Dorsolateral prefrontal cortex (tissue), 120 donors: ENCODE measurements at regions of chr4 and their contacts with region 1.

Region 1: GRCh38 chr4:39134683-39135319 is 47.5 kb upstream of the WDR19 start:
- DNase-seq: no peak
- H3K4me3 ChIP-seq: peak overlapping the region in 30 of 59 donors; percentile 1 to 53 (median 20)
- H3K27ac ChIP-seq: peak overlapping the region in 37 of 59 donors; percentile 2 to 77 (median 38)
- H3K27me3 ChIP-seq: no peaks in the 10 kb centered on the region
- CTCF ChIP-seq: no peak

Region 2: GRCh38 chr4:38768968-38769394 is 365.8 kb before region 1 on chr4:
- intact Hi-C with region 1: loop called in 1 of 2 experiments (anchors 10 kb)
- DNase-seq: no peak
- H3K4me3 ChIP-seq: no peak overlapping the region
- H3K27ac ChIP-seq: peak overlapping the region in 7 of 59 donors; percentile 3 to 59 (median 12)
- H3K27me3 ChIP-seq: no peaks in the 10 kb centered on the region
- CTCF ChIP-seq: no peak